HepG2 (cell line): ENCODE measurements at regions of chr7 and their contacts with region 1.

Region 1: GRCh38 chr7:68816491-68816890 is 781.8 kb upstream of the AUTS2 start:
- DNase-seq: no peak
- ATAC-seq: no peak
- H3K4me3 ChIP-seq: no peak overlapping the region
- H3K27ac ChIP-seq: no peak overlapping the region
- H3K4me1 ChIP-seq: no peaks in the 10 kb centered on the region
- H3K27me3 ChIP-seq: no peaks in the 10 kb centered on the region
- CTCF ChIP-seq: no peak
- EP300 ChIP-seq: no peak
- POLR2A ChIP-seq: no peak
- RAD21 ChIP-seq: no peak

Region 2: GRCh38 chr7:69674701-69675182 is 858.3 kb after region 1 on chr7:
- CTCF ChIA-PET with region 1: no interaction called
- POLR2A ChIA-PET with region 1: no interaction called
- in situ Hi-C with region 1: no loop called
- intact Hi-C with region 1: no loop called
- DNase-seq: no peak
- ATAC-seq: no peak
- H3K4me3 ChIP-seq: no peak overlapping the region
- H3K27ac ChIP-seq: no peak overlapping the region
- H3K4me1 ChIP-seq: no peaks in the 10 kb centered on the region
- H3K27me3 ChIP-seq: no peaks in the 10 kb centered on the region
- CTCF ChIP-seq: no peak
- EP300 ChIP-seq: no peak
- POLR2A ChIP-seq: no peak
- RAD21 ChIP-seq: no peak

Region 3: DNA sequence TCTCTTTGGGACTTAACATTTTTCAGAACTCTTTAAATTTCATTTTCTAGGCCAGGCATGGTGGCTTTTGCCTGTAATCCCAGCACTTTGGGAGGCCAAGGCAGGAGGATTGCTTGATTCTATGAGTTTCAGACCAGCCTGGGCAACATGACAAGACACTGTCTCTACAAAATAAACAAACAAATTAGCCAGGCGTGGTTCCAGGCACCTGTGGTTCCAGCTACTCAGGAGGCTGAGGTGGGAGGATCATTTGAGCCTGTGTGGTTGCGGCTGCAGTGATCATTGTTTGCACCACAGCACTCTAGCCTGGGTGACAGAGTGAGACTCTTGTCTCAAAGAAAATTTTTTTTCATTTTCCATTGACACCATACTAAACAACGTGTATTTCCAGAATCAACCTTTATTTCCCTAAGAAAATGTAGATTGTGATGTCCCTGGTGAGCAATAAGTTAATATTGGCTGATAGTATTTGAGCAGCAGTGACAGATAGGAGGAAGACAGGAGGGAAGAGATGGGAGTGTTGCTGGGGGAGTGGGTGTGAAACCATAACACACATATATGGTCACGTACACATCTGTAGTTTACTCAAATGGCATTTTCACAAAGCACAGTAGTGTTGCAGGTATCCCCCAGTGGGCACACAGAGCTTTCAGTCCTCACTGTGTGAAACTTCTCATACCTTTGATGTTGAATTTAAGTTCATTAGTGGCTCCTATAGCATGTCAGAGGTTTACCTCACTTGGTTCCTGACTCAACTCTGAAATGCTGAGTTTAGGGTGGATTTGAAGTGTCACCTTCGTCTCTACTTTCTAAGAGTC is 987.4 kb after region 1 on chr7:
- CTCF ChIA-PET with region 1: no interaction called
- POLR2A ChIA-PET with region 1: no interaction called
- in situ Hi-C with region 1: no loop called
- intact Hi-C with region 1: loop called (anchors 5 kb)
- DNase-seq: no peak
- ATAC-seq: no peak
- H3K4me3 ChIP-seq: no peak overlapping the region
- H3K27ac ChIP-seq: no peak overlapping the region
- H3K4me1 ChIP-seq: no peaks in the 10 kb centered on the region
- H3K27me3 ChIP-seq: no peaks in the 10 kb centered on the region
- CTCF ChIP-seq: no peak
- EP300 ChIP-seq: no peak
- POLR2A ChIP-seq: no peak
- RAD21 ChIP-seq: no peak